GM18951 (cell line): ENCODE measurements at regions of chr6 and their contacts with region 1.

Region 1: GRCh38 chr6:24689964-24690363 is 23.1 kb downstream of the ACOT13 start:
- POLR2A ChIP-seq: no peak

Region 2: GRCh38 chr6:24283043-24283985 is 406.6 kb before region 1 on chr6:
- in situ Hi-C with region 1: loop called (anchors 10 kb)
- POLR2A ChIP-seq: no peak

Region 3: GRCh38 chr6:24646782-24647181 is 43.2 kb before region 1 on chr6:
- in situ Hi-C with region 1: no loop called
- POLR2A ChIP-seq: no peak

Region 4: GRCh38 chr6:24788048-24788665 is 98.2 kb after region 1 on chr6:
- in situ Hi-C with region 1: no loop called
- POLR2A ChIP-seq: no peak

Region 5: GRCh38 chr6:25138237-25139125 is 448.5 kb after region 1 on chr6:
- in situ Hi-C with region 1: no loop called
- POLR2A ChIP-seq: peak; percentile 51